Ascending aorta (tissue), 2 donors: ENCODE measurements at regions of chr11 and their contacts with region 1.

Region 1: DNA sequence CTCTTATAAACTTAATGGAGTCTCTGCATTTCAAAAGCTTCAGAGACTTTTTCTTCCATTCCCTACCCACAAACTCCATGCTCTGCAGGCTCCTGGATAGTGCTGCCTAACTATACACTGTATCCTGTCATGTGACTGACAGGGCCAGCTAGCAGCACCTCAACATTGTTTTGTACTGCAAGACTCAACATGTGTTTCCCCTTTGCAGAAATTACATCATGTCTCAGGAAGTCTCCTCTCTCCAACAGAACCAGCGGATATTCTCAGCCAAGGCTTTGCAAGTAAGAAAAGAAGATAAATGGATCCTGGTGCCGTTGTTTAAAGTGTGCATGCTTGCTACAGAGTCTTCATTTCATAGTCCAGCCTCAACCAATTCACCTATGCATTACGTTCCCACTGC is 164.0 kb upstream of the UBASH3B start:
- DNase-seq: no peak
- H3K4me3 ChIP-seq: no peak overlapping the region
- H3K27ac ChIP-seq: peak overlapping the region; percentile 52 to 57
- H3K4me1 ChIP-seq: peaks cover 0 to 21% of the 10 kb centered on the region in 2 donors
- H3K27me3 ChIP-seq: no peaks in the 10 kb centered on the region
- CTCF ChIP-seq: no peak

Region 2: DNA sequence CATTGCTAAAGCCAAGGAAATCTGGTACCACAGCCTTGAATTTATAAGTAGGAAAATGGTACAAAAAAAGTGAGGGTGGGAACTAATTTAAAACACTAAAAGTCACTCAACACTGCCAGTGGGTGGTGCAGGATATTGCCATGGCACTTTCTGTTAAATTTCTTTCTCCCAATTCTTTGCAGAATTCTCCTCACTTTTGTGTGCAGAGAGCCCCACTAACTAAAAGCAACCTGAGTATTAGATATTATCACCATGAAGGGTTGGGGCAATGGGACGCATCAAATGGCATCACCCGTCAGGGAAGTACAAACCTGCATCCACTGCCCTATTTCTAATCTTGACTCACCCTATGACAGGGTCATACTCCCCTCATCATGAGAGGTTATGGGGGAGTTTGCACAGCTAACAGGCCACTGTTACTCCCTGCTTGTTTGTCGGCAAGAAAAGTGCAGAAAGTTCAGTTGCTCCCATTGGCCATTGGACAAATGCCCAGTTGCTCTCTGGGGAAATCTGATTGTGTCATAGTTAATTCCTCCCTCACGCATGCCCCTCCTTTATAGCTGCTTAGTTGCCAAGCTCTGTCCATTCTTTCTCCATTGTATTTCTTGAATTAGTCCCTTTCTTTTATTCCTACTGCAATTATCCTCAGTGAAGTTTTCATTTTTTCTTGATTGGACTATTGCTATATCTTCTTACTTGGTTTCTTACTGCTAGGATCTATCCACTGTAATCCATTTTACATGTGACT is 281.7 kb before region 1 on chr11:
- intact Hi-C with region 1: loop called (anchors 5 kb)
- DNase-seq: peak in 1 of 2 donors; percentile 92
- H3K4me3 ChIP-seq: peak overlapping the region in 1 of 2 donors; percentile 6
- H3K27ac ChIP-seq: peak overlapping the region; percentile 86 to 90
- H3K4me1 ChIP-seq: peaks cover 5 to 62% of the 10 kb centered on the region in 2 donors
- H3K27me3 ChIP-seq: no peaks in the 10 kb centered on the region
- CTCF ChIP-seq: no peak

Region 3: DNA sequence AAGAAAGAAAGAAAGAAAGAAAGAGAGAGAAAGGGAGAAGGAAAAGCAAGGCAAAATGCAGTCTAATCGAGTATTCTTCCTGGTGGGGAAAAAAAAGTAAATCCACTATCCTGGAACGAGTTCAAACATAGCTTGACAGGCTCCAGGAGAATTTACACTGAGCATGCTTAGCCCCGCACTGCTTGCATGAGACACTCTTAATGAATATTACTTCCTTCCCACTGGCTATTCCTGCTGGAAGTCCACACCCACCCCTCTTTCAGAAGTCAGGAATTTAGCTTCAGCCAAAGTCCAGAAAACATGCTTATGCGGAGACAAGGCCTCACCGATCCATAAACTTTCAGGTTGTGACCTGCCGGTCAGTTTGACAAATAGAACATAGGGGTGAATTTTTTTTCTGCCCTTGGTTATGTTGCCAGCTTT is 123.7 kb before region 1 on chr11:
- intact Hi-C with region 1: loop called (anchors 1 kb)
- DNase-seq: peak in 1 of 2 donors; percentile 71
- H3K4me3 ChIP-seq: peak overlapping the region in 1 of 2 donors; percentile 62
- H3K27ac ChIP-seq: peak overlapping the region; percentile 71 to 82
- H3K4me1 ChIP-seq: peaks cover 0 to 10% of the 10 kb centered on the region in 2 donors
- H3K27me3 ChIP-seq: no peaks in the 10 kb centered on the region
- CTCF ChIP-seq: no peak

Region 4: GRCh38 chr11:122439911-122440810 is 51.3 kb before region 1 on chr11:
- intact Hi-C with region 1: loop called (anchors 5 kb)
- DNase-seq: no peak
- H3K4me3 ChIP-seq: peak overlapping the region; percentile 56 to 83
- H3K27ac ChIP-seq: peak overlapping the region; percentile 43 to 46
- H3K4me1 ChIP-seq: peaks cover 4 to 6% of the 10 kb centered on the region in 2 donors
- H3K27me3 ChIP-seq: no peaks in the 10 kb centered on the region
- CTCF ChIP-seq: no peak